B cell (primary cell): ENCODE measurements at regions of chr2 and their contacts with region 1.

Region 1: DNA sequence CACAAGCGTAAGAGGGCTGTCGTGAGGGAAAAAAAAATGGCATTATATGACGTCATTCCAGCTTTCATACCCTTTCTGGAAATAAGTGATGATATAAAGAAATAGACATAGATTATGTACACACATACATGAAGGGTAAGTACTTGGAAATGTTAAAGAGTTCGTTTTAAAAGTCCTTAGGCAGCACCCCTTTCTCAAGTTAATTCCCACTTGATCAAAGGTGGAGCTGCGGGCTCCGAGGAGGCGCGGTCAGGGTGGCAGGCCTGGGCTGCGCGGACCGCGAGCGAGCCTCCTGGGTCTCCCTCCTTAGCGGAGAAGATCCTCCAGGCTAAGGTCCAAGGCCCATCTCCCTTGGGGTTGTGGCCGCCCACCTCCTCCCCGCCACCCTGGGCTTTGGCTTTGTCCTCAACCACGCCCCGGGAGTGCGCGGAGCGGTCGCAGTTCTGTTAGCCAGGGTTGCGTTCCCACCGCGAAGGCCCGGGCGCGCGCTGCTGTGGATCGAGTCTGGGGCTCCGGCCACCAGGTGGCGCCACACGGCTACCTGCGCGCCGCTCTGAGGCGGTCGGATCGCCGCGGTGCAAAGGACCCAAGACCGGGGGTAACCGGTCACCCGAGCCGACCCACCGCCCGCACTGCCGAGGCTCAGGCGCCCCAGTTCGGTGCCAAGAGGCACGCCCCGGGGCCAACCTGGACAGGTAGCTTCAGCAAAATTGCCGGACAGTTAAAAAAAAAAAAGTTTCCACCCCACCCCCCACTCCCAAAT is 66.8 kb downstream of the HNRNPLL start:
- DNase-seq: peak; percentile 85
- ATAC-seq: peak; percentile 54
- H3K4me3 ChIP-seq: peak overlapping the region in 4 of 5 experiments; percentile 40 to 79 (median 52)
- H3K4me3 Mint-ChIP-seq: peak overlapping the region; percentile 78
- H3K27ac ChIP-seq: no peak overlapping the region
- H3K27ac Mint-ChIP-seq: peak overlapping the region; percentile 37
- H3K4me1 ChIP-seq: peaks cover 28 to 39% of the 10 kb centered on the region in 2 donors
- H3K4me1 Mint-ChIP-seq: peaks cover 34% of the 10 kb centered on the region
- H3K27me3 ChIP-seq: peaks cover 0 to 7% (median 1%) of the 10 kb centered on the region in 4 experiments
- H3K27me3 Mint-ChIP-seq: peaks cover 23% of the 10 kb centered on the region
- CTCF ChIP-seq: peak; percentile 90

Region 2: GRCh38 chr2:38523728-38524437 is 12.0 kb before region 1 on chr2:
- CTCF ChIA-PET with region 1: interaction called, 16 read pairs
- POLR2A ChIA-PET with region 1: interaction called, 4 read pairs
- intact Hi-C with region 1: no loop called
- DNase-seq: no peak
- ATAC-seq: no peak
- H3K4me3 ChIP-seq: no peak overlapping the region
- H3K4me3 Mint-ChIP-seq: no peak overlapping the region
- H3K27ac ChIP-seq: no peak overlapping the region
- H3K27ac Mint-ChIP-seq: no peak overlapping the region
- H3K4me1 ChIP-seq: peaks cover 7 to 8% of the 10 kb centered on the region in 2 donors
- H3K4me1 Mint-ChIP-seq: peaks cover 17% of the 10 kb centered on the region
- H3K27me3 ChIP-seq: peaks cover 0 to 15% (median 3%) of the 10 kb centered on the region in 4 experiments
- H3K27me3 Mint-ChIP-seq: peaks cover 17% of the 10 kb centered on the region
- CTCF ChIP-seq: no peak

Region 3: DNA sequence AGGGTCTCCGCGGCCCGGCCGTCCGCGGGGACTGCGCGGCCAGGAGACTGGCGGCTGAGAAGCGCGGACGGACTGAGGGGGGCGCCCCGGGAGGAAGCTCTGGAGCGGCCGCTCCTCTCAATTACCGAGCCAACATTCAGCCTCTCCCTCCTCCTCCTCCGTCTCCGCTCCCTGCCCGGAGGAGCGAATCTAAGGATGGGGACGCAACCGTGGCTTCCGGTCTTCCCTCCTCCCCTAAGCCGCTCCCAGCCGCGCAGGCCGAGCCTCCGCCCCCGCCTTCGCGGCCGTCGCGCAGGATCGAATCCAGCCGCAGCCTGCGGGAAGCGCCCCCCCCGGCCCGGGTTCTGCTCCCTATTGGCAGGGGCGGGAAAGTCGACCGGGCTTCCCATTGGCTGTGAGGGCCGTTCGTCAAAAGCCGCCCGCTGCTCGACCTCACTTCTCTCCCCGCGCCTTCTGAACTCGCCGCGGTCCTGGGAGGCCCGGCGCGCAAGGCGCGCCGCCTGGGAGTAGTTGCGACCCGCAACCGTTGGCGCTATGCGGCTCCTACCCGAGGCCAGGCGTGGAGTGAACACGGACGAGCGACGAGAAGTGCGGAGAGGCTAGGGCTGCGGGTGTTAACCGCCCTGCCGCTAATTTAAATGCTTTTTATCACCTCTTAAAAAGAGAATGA is 66.9 kb after region 1 on chr2 and contains the start of gene HNRNPLL:
- CTCF ChIA-PET with region 1: interaction called, 12 read pairs
- POLR2A ChIA-PET with region 1: no interaction called
- intact Hi-C with region 1: loop called (anchors 5 kb)
- DNase-seq: peak; percentile 89
- ATAC-seq: peak; percentile 86
- H3K4me3 ChIP-seq: peak within 1 kb of the TSS; percentile 71 to 83 (median 81)
- H3K4me3 Mint-ChIP-seq: peak within 1 kb of the TSS; percentile 93
- H3K27ac ChIP-seq: peak within 1 kb of the TSS in 1 of 2 donors; percentile 38
- H3K27ac Mint-ChIP-seq: peak within 1 kb of the TSS; percentile 86
- H3K4me1 ChIP-seq: peaks cover 13 to 27% of the 10 kb centered on the region in 2 donors
- H3K4me1 Mint-ChIP-seq: peaks cover 22% of the 10 kb centered on the region
- H3K27me3 ChIP-seq: peaks cover 0 to 52% (median 32%) of the 10 kb centered on the region in 4 experiments
- H3K27me3 Mint-ChIP-seq: peaks cover 35% of the 10 kb centered on the region
- CTCF ChIP-seq: no peak
- total RNA-seq, gene HNRNPLL: 5.8 and 6.7 TPM in 2 replicates

Region 4: GRCh38 chr2:38740851-38741731 is 205.2 kb after region 1 on chr2:
- CTCF ChIA-PET with region 1: interaction called, 11 read pairs
- POLR2A ChIA-PET with region 1: no interaction called
- intact Hi-C with region 1: loop called (anchors 2 kb)
- DNase-seq: peak; percentile 69
- ATAC-seq: peak; percentile 16
- H3K4me3 ChIP-seq: no peak overlapping the region
- H3K4me3 Mint-ChIP-seq: no peak overlapping the region
- H3K27ac ChIP-seq: peak overlapping the region in 1 of 2 donors; percentile 4
- H3K27ac Mint-ChIP-seq: peak overlapping the region; percentile 50
- H3K4me1 ChIP-seq: no peaks in the 10 kb centered on the region
- H3K4me1 Mint-ChIP-seq: peaks cover 24% of the 10 kb centered on the region
- H3K27me3 ChIP-seq: no peaks in the 10 kb centered on the region
- H3K27me3 Mint-ChIP-seq: no peaks in the 10 kb centered on the region
- CTCF ChIP-seq: peak; percentile 80

Region 5: GRCh38 chr2:38778687-38779082 is 242.8 kb after region 1 on chr2:
- CTCF ChIA-PET with region 1: no interaction called
- POLR2A ChIA-PET with region 1: no interaction called
- intact Hi-C with region 1: loop called (anchors 1 kb)
- DNase-seq: no peak
- ATAC-seq: no peak
- H3K4me3 ChIP-seq: peak overlapping the region; percentile 52 to 95 (median 81)
- H3K4me3 Mint-ChIP-seq: peak overlapping the region; percentile 98
- H3K27ac ChIP-seq: peak overlapping the region; percentile 31 to 82
- H3K27ac Mint-ChIP-seq: peak overlapping the region; percentile 95
- H3K4me1 ChIP-seq: peaks cover 6 to 10% of the 10 kb centered on the region in 2 donors
- H3K4me1 Mint-ChIP-seq: peaks cover 11% of the 10 kb centered on the region
- H3K27me3 ChIP-seq: peaks cover 0 to 3% (median 0%) of the 10 kb centered on the region in 4 experiments
- H3K27me3 Mint-ChIP-seq: peaks cover 17% of the 10 kb centered on the region
- CTCF ChIP-seq: no peak